ENCODE measurements at regions of chr13 and their contacts with region 1.

Region 1: DNA sequence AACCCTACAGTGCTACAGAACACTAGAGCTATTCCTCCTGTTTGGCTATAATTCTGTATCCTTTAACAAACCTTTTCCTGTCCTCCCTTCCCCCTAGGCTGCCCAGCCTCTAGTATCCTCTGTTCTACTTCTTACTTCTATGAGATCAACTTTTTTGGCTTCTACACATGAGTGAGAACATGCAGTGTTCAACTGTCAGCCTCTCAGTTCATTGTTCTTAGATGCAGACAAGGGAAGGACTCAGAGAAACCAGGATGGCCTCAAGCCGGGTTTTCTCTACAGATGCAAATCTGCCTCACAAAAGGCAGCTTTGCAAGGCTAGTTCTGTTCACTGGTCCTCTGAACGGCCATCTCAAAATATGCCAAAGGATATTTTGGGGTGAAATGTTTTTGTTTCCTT is 18.4 kb downstream of the AMER2 start:
- DNase-seq: no peak
- H3K4me3 ChIP-seq: no peak overlapping the region
- H3K27ac ChIP-seq: no peak overlapping the region
- H3K4me1 ChIP-seq: peaks cover 0 to 16% (median 8%) of the 10 kb centered on the region in 4 experiments; a peak in 6 of 7 replicates
- H3K27me3 ChIP-seq: no peaks in the 10 kb centered on the region; a peak in 2 of 7 replicates
- CTCF ChIP-seq: no peak
- EP300 ChIP-seq: no peak
- POLR2A ChIP-seq: no peak
- RAD21 ChIP-seq: no peak; a peak in 1 of 4 replicates

Region 2: GRCh38 chr13:25137637-25138115 is 16.1 kb before region 1 on chr13:
- CTCF ChIA-PET with region 1: interaction called, 21 read pairs
- POLR2A ChIA-PET with region 1: interaction called, 4 read pairs
- DNase-seq: no peak
- H3K4me3 ChIP-seq: peak overlapping the region in 1 of 4 experiments; percentile 40; a peak in 2 of 8 replicates
- H3K27ac ChIP-seq: no peak overlapping the region
- H3K4me1 ChIP-seq: peaks cover 0 to 19% (median 11%) of the 10 kb centered on the region in 4 experiments; a peak in 5 of 7 replicates
- H3K27me3 ChIP-seq: no peaks in the 10 kb centered on the region
- CTCF ChIP-seq: no peak
- EP300 ChIP-seq: no peak
- POLR2A ChIP-seq: no peak
- RAD21 ChIP-seq: no peak

Region 3: GRCh38 chr13:25267715-25268114 is 114.0 kb after region 1 on chr13:
- CTCF ChIA-PET with region 1: no interaction called
- POLR2A ChIA-PET with region 1: no interaction called
- DNase-seq: no peak
- H3K4me3 ChIP-seq: no peak overlapping the region
- H3K27ac ChIP-seq: no peak overlapping the region
- H3K4me1 ChIP-seq: peaks cover 0 to 3% (median 0%) of the 10 kb centered on the region in 4 experiments; a peak in 1 of 7 replicates
- H3K27me3 ChIP-seq: no peaks in the 10 kb centered on the region
- CTCF ChIP-seq: no peak
- EP300 ChIP-seq: no peak
- POLR2A ChIP-seq: no peak
- RAD21 ChIP-seq: 0 out of 4 replicates have a peak, but pooled peaks of 1 of the 2 experiments have one; percentile 14